ENCODE measurements at regions of chr12 and their contacts with region 1.

Region 1: GRCh38 chr12:103686026-103686425 is 99.0 kb downstream of the STAB2 start:
- DNase-seq: no peak
- H3K4me3 ChIP-seq: no peak overlapping the region
- H3K27ac ChIP-seq: no peak overlapping the region
- H3K4me1 ChIP-seq: no peaks in the 10 kb centered on the region
- H3K27me3 ChIP-seq: no peaks in the 10 kb centered on the region
- CTCF ChIP-seq: no peak

Region 2: GRCh38 chr12:103771466-103771865 is 85.4 kb after region 1 on chr12:
- CTCF ChIA-PET with region 1: interaction called, 10 read pairs
- dilution Hi-C with region 1: no loop called
- in situ Hi-C with region 1: no loop called
- intact Hi-C with region 1: no loop called
- DNase-seq: no peak
- H3K4me3 ChIP-seq: no peak overlapping the region
- H3K27ac ChIP-seq: no peak overlapping the region
- H3K4me1 ChIP-seq: no peaks in the 10 kb centered on the region
- H3K27me3 ChIP-seq: no peaks in the 10 kb centered on the region
- CTCF ChIP-seq: peak; percentile 21 to 50

Region 3: DNA sequence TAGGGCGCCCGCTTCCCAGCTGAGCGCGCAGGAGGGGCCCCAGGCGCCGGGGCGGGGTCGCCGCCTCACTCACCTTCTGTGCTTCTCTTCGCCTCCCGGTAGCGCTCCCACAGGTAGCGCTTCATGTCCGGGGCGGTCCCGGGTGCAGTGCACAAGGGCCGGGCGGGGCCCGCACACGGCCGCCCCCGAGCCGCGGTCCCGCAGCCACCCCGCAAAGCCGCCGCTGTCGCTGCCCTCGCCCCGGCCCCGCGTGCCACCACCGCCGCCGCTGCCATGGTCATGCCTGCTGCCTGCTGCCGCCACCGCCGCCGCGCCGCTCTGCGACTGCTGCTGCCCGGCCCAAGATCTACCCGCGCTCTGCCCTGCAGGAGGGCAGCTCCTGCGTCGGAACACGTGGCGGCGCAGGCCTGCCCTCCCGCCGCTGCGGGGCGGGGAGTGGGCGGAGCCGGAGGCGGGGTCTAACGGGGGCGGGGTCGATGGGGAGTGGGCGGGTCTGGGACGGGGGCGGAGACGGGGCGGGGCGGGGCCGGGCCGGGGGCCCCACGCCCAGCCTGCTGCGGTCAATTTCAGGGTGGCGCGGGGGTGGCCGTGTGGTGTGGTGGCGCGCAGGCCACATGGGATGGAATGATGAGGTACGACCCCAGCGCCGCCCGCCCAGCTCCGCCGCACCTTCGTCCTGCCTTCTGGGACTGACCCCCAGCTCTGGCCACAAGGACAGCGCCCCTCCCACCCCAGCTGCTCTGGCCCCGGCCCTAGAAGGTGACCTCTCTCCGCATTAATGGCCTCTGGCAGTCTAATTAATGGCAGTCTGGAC is 155.1 kb after region 1 on chr12 and contains the start of gene NT5DC3:
- CTCF ChIA-PET with region 1: no interaction called
- dilution Hi-C with region 1: no loop called
- in situ Hi-C with region 1: no loop called
- intact Hi-C with region 1: no loop called
- DNase-seq: peak; percentile 85
- H3K4me3 ChIP-seq: peak within 1 kb of the TSS; percentile 71 to 87 (median 84)
- H3K27ac ChIP-seq: peak within 1 kb of the TSS; percentile 95
- H3K4me1 ChIP-seq: peaks cover 16% of the 10 kb centered on the region
- H3K27me3 ChIP-seq: no peaks in the 10 kb centered on the region
- CTCF ChIP-seq: no peak
- total RNA-seq, gene NT5DC3: 46.4 to 98.5 TPM